ENCODE measurements at regions of chr3 and their contacts with region 1.

Region 1: DNA sequence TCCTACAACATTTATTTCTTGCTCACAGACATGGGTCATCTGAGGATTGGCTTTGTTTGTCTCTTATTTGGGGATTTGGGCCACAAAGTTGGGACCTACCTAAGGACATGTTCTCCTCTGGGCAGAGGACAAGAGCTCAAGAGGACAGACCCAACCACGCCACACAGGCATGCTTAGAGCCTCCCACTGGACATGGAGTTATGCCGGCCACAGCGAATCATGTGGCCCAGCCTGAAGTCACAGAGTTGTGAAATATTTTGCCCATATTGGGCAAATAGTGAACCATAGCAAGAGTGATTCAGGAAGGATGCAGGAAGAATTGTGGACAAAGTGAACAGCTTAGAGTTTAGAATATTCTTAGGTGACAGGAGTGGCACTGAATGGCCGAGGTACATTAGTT is 9.9 kb downstream of the TRAK1 start:
- DNase-seq: peak; percentile 73
- H3K4me3 Mint-ChIP-seq: no peak overlapping the region
- H3K27ac Mint-ChIP-seq: peak overlapping the region; percentile 88
- H3K4me1 Mint-ChIP-seq: peaks cover 49% of the 10 kb centered on the region
- H3K27me3 Mint-ChIP-seq: no peaks in the 10 kb centered on the region
- CTCF ChIP-seq: no peak

Region 2: GRCh38 chr3:41893977-41894376 is 207.1 kb before region 1 on chr3:
- CTCF ChIA-PET with region 1: interaction called, 118 read pairs
- POLR2A ChIA-PET with region 1: interaction called, 8 read pairs
- intact Hi-C with region 1: loop called (anchors 1 kb)
- DNase-seq: peak; percentile 65
- H3K4me3 Mint-ChIP-seq: no peak overlapping the region
- H3K27ac Mint-ChIP-seq: no peak overlapping the region
- H3K4me1 Mint-ChIP-seq: no peaks in the 10 kb centered on the region
- H3K27me3 Mint-ChIP-seq: no peaks in the 10 kb centered on the region
- CTCF ChIP-seq: peak; percentile 40

Region 3: GRCh38 chr3:41961750-41962679 is 139.0 kb before region 1 on chr3 and contains the start of gene ULK4:
- CTCF ChIA-PET with region 1: interaction called, 15 read pairs
- POLR2A ChIA-PET with region 1: no interaction called
- intact Hi-C with region 1: loop called (anchors 1 kb)
- DNase-seq: peak; percentile 99
- H3K4me3 Mint-ChIP-seq: peak within 1 kb of the TSS; percentile 81
- H3K27ac Mint-ChIP-seq: peak within 1 kb of the TSS; percentile 89
- H3K4me1 Mint-ChIP-seq: peaks cover 6% of the 10 kb centered on the region
- H3K27me3 Mint-ChIP-seq: no peaks in the 10 kb centered on the region
- CTCF ChIP-seq: no peak
- total RNA-seq, gene ULK4: 6.9 and 7.8 TPM in 2 replicates

Region 4: GRCh38 chr3:42036483-42036823 is 64.6 kb before region 1 on chr3:
- CTCF ChIA-PET with region 1: interaction called, 11 read pairs
- POLR2A ChIA-PET with region 1: interaction called, 3 read pairs
- intact Hi-C with region 1: no loop called
- DNase-seq: peak; percentile 70
- H3K4me3 Mint-ChIP-seq: no peak overlapping the region
- H3K27ac Mint-ChIP-seq: peak overlapping the region; percentile 70
- H3K4me1 Mint-ChIP-seq: peaks cover 63% of the 10 kb centered on the region
- H3K27me3 Mint-ChIP-seq: no peaks in the 10 kb centered on the region
- CTCF ChIP-seq: no peak

Region 5: GRCh38 chr3:42118762-42119361 is 17.8 kb after region 1 on chr3:
- CTCF ChIA-PET with region 1: interaction called, 46 read pairs
- POLR2A ChIA-PET with region 1: interaction called, 5 read pairs
- intact Hi-C with region 1: no loop called
- DNase-seq: peak; percentile 72
- H3K4me3 Mint-ChIP-seq: no peak overlapping the region
- H3K27ac Mint-ChIP-seq: peak overlapping the region; percentile 72
- H3K4me1 Mint-ChIP-seq: peaks cover 49% of the 10 kb centered on the region
- H3K27me3 Mint-ChIP-seq: no peaks in the 10 kb centered on the region
- CTCF ChIP-seq: peak; percentile 36

Region 6: DNA sequence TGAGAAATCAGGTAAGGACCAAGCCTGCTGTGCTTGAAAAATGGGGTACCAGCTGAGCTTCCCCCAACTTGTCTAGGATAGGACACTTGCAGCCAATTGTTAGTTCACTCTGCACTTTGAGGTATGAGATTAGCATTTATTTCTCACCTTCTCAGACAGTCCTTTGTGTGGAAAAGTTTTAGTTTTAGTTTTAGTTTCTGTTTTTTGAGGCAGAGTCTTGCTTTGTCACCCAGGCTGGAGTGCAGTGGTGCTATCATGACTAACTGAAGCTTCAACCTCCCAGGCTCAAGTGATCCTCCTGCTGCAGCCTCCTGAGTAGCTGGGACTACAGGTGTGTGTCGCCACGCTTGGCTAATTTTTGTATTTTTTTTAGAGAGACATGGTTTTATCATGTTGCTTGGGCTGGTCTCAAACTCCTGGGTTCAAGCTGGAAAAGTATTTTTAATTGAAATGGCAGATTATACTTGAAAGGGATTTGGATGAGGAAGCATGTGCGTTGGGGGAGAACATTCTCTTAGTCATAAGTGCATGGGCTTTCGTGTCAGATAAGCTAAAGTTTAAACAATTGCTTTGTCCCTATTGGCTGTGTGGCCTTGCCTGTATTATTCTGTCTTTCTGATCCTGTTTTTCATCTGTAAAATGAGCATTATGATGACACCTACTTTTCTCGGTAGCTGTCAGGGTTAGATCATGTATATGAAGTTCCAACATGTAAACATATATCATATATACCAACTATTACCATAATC is 190.1 kb after region 1 on chr3:
- CTCF ChIA-PET with region 1: no interaction called
- POLR2A ChIA-PET with region 1: no interaction called
- intact Hi-C with region 1: no loop called
- DNase-seq: no peak
- H3K4me3 Mint-ChIP-seq: no peak overlapping the region
- H3K27ac Mint-ChIP-seq: no peak overlapping the region
- H3K4me1 Mint-ChIP-seq: no peaks in the 10 kb centered on the region
- H3K27me3 Mint-ChIP-seq: peaks cover 18% of the 10 kb centered on the region
- CTCF ChIP-seq: no peak

Measured in MCF 10A (cell line).